CD4-positive, alpha-beta T cell (primary cell): ENCODE measurements at regions of chrX and their contacts with region 1.

Region 1: GRCh38 chrX:9873952-9874351 is 87.7 kb downstream of the SHROOM2 start:
- DNase-seq: peak; percentile 4 to 61 (median 24)
- ATAC-seq: peak; percentile 71
- H3K4me3 ChIP-seq: no peak overlapping the region
- H3K4me3 Mint-ChIP-seq: no peak overlapping the region
- H3K27ac ChIP-seq: no peak overlapping the region
- H3K27ac Mint-ChIP-seq: no peak overlapping the region
- H3K4me1 ChIP-seq: no peaks in the 10 kb centered on the region
- H3K4me1 Mint-ChIP-seq: peaks cover 23% of the 10 kb centered on the region
- H3K27me3 ChIP-seq: no peaks in the 10 kb centered on the region
- H3K27me3 Mint-ChIP-seq: peaks cover 17% of the 10 kb centered on the region
- CTCF ChIP-seq: peak; percentile 31

Region 2: DNA sequence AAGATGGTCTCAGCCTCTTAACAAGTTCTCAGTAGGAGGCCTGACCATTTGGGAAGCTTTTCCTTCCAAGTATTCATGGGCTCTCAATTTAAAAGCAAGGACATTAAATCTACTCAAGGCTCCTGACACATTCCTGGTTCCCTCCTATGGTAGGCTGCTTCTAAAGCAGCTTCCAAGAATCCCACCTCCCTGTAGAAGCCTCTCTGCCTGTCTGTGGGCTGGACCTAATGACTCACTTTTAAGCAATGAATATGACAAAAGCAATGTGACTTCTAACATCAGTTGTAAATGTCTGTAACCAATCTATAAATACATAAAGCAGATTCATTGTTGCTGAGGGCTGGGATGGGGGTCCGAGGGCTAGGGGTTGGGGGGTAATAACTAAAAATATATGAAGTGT is 740.5 kb before region 1 on chrX:
- CTCF ChIA-PET with region 1: no interaction called
- POLR2A ChIA-PET with region 1: no interaction called
- intact Hi-C with region 1: no loop called
- DNase-seq: no peak
- ATAC-seq: no peak
- H3K4me3 ChIP-seq: no peak overlapping the region
- H3K4me3 Mint-ChIP-seq: no peak overlapping the region
- H3K27ac ChIP-seq: no peak overlapping the region
- H3K27ac Mint-ChIP-seq: no peak overlapping the region
- H3K4me1 ChIP-seq: no peaks in the 10 kb centered on the region
- H3K4me1 Mint-ChIP-seq: no peaks in the 10 kb centered on the region
- H3K27me3 ChIP-seq: no peaks in the 10 kb centered on the region
- H3K27me3 Mint-ChIP-seq: no peaks in the 10 kb centered on the region
- CTCF ChIP-seq: no peak

Region 3: DNA sequence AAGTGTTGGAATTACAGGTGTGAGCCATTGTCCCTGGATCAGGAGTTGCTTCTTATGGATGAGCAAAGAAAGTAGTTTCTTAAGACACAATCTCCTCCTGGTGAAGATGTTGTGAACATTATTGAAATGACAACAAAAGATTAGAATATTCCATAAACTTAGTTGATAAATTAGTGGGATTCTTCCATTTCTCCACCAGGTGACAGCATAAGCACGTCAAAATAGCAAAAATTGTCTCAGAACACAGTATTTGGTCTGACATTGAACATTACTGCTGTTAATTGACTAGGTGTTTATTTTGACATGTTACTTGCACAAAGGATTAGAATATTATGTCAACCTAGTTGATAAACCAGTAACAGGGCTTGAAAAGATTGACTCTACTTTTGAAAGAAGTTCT is 114.8 kb after region 1 on chrX:
- CTCF ChIA-PET with region 1: no interaction called
- POLR2A ChIA-PET with region 1: no interaction called
- intact Hi-C with region 1: loop called in 1 of 2 experiments (anchors 2 kb)
- DNase-seq: peak in 3 of 14 experiments; percentile 33 to 41 (median 39)
- ATAC-seq: no peak
- H3K4me3 ChIP-seq: no peak overlapping the region
- H3K4me3 Mint-ChIP-seq: no peak overlapping the region
- H3K27ac ChIP-seq: no peak overlapping the region
- H3K27ac Mint-ChIP-seq: no peak overlapping the region
- H3K4me1 ChIP-seq: no peaks in the 10 kb centered on the region
- H3K4me1 Mint-ChIP-seq: no peaks in the 10 kb centered on the region
- H3K27me3 ChIP-seq: no peaks in the 10 kb centered on the region
- H3K27me3 Mint-ChIP-seq: no peaks in the 10 kb centered on the region
- CTCF ChIP-seq: no peak

Region 4: GRCh38 chrX:10467793-10468192 is 593.8 kb after region 1 on chrX:
- CTCF ChIA-PET with region 1: no interaction called
- POLR2A ChIA-PET with region 1: no interaction called
- intact Hi-C with region 1: no loop called
- DNase-seq: no peak
- ATAC-seq: no peak
- H3K4me3 ChIP-seq: no peak overlapping the region
- H3K4me3 Mint-ChIP-seq: no peak overlapping the region
- H3K27ac ChIP-seq: no peak overlapping the region
- H3K27ac Mint-ChIP-seq: no peak overlapping the region
- H3K4me1 ChIP-seq: no peaks in the 10 kb centered on the region
- H3K4me1 Mint-ChIP-seq: no peaks in the 10 kb centered on the region
- H3K27me3 ChIP-seq: no peaks in the 10 kb centered on the region
- H3K27me3 Mint-ChIP-seq: no peaks in the 10 kb centered on the region
- CTCF ChIP-seq: no peak